Aorta (tissue), 5 donors: ENCODE measurements at regions of chr10 and their contacts with region 1.

Region 1: GRCh38 chr10:48608279-48608681 is 3.4 kb upstream of the ARHGAP22 start:
- DNase-seq: no peak
- ATAC-seq: no peak
- H3K4me3 ChIP-seq: no peak overlapping the region
- H3K27ac ChIP-seq: no peak overlapping the region
- H3K4me1 ChIP-seq: no peaks in the 10 kb centered on the region
- H3K27me3 ChIP-seq: no peaks in the 10 kb centered on the region

Region 2: GRCh38 chr10:48253970-48254657 is 354.2 kb before region 1 on chr10:
- intact Hi-C with region 1: no loop called
- DNase-seq: no peak
- ATAC-seq: no peak
- H3K4me3 ChIP-seq: no peak overlapping the region
- H3K27ac ChIP-seq: no peak overlapping the region
- H3K4me1 ChIP-seq: no peaks in the 10 kb centered on the region
- H3K27me3 ChIP-seq: no peaks in the 10 kb centered on the region

Region 3: DNA sequence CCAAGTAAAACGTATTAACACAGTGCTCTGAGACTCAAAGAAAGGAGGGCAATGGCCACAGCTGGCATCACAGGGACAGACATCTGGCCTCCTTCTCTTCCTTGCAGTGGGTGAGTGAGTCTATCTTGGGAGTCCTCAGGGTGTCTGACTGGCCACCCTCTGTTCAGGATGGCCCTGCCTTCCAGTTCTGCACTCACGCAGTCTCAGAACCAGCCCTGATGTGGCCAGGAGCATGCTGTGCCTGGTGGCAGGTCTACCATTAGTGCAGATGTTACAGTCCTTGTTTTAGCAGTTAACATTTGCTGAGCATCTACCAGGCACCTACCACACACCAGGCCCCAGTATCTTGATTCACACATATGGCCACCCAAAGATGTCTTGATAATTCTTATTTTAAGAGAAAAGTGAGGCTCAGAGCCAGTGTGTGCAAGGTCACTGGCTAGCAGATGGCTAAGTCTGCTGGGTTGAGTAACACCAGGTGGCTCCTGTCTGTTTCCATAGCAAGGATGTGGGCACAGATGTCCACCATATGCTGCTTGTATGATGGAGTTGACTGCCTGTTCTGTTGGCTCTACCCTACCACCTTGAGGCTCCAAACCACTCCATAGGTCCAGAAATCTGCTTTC is 19.8 kb after region 1 on chr10:
- intact Hi-C with region 1: loop called in 1 of 2 experiments (anchors 2 kb)
- DNase-seq: no peak
- ATAC-seq: no peak
- H3K4me3 ChIP-seq: no peak overlapping the region
- H3K27ac ChIP-seq: no peak overlapping the region
- H3K4me1 ChIP-seq: no peaks in the 10 kb centered on the region
- H3K27me3 ChIP-seq: no peaks in the 10 kb centered on the region